Activated CD4-positive, alpha-beta T cell treated with anti-CD3 and anti-CD28 coated beads for 36 hours (primary cell): ENCODE measurements at regions of chr17 and their contacts with region 1.

Region 1: DNA sequence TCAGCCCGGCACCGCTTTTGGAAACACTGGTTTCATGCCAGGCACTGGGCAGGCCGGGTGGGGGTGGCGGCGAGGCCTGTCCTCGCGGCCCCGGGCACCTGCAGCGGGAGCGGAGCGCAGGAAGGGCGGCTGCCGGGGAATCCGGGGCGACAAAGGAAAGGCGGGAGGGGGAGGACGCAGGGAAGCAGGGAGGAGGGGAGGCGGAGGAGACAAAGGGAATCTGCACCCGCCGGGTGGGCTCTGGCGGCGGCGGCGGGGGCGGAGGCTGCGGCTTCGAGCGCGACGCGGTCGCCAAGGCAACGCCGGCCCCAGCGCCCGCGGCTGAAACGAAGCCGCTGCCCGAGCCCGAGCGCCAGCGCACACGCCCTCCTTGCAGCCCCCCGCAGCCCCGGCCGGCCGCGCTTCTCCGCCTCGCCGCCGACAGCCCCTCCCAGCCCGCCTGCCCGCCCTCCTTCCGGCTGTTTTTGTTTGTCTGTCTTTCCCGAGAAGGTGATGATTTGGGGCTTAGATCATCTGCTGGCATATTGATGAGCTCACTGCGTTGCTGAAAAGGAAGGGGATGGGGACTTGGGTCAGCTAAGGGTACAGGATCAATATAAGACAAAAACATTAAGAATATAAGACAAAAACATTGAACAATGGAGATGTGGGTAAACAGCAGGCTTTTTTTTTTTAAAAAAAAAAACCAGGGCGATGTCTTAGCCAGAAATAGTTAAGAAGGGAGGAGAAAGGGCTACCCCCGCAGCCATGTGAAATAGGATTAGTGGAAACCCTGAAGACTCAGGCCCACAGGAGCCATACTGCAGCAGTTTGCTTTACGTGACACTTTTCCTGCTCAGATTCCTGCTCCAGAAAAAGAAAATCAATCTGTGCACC is 32.7 kb downstream of the CDK5R1 start:
- DNase-seq: peak; percentile 82
- ATAC-seq: peak; percentile 5
- H3K4me3 Mint-ChIP-seq: peak overlapping the region; percentile 70
- H3K27ac Mint-ChIP-seq: peak overlapping the region; percentile 92
- H3K4me1 Mint-ChIP-seq: peaks cover 89% of the 10 kb centered on the region
- H3K27me3 Mint-ChIP-seq: no peaks in the 10 kb centered on the region

Region 2: GRCh38 chr17:32222620-32223019 is 296.8 kb before region 1 on chr17:
- CTCF ChIA-PET with region 1: no interaction called
- POLR2A ChIA-PET with region 1: interaction called, 4 read pairs
- intact Hi-C with region 1: loop called in 1 of 2 experiments (anchors 2 kb)
- DNase-seq: no peak
- ATAC-seq: no peak
- H3K4me3 Mint-ChIP-seq: no peak overlapping the region
- H3K27ac Mint-ChIP-seq: no peak overlapping the region
- H3K4me1 Mint-ChIP-seq: peaks cover 46% of the 10 kb centered on the region
- H3K27me3 Mint-ChIP-seq: no peaks in the 10 kb centered on the region

Region 3: GRCh38 chr17:32444308-32445073 is 75.0 kb before region 1 on chr17 and contains the start of gene PSMD11:
- CTCF ChIA-PET with region 1: interaction called, 4 read pairs
- POLR2A ChIA-PET with region 1: interaction called, 5 read pairs
- intact Hi-C with region 1: loop called (anchors 1 kb)
- DNase-seq: peak; percentile 100
- ATAC-seq: peak; percentile 96
- H3K4me3 Mint-ChIP-seq: peak within 1 kb of the TSS; percentile 82
- H3K27ac Mint-ChIP-seq: peak within 1 kb of the TSS; percentile 95
- H3K4me1 Mint-ChIP-seq: peaks cover 32% of the 10 kb centered on the region
- H3K27me3 Mint-ChIP-seq: peaks cover 2% of the 10 kb centered on the region
- total RNA-seq, gene PSMD11: 109 to 135 TPM

Region 4: GRCh38 chr17:32486111-32486700 is 33.3 kb before region 1 on chr17:
- CTCF ChIA-PET with region 1: interaction called, 7 read pairs
- POLR2A ChIA-PET with region 1: interaction called, 19 read pairs
- intact Hi-C with region 1: loop called (anchors 1 to 2 kb)
- DNase-seq: peak; percentile 82
- ATAC-seq: peak; percentile 71
- H3K4me3 Mint-ChIP-seq: peak overlapping the region; percentile 54
- H3K27ac Mint-ChIP-seq: no peak overlapping the region
- H3K4me1 Mint-ChIP-seq: peaks cover 48% of the 10 kb centered on the region
- H3K27me3 Mint-ChIP-seq: no peaks in the 10 kb centered on the region

Region 5: DNA sequence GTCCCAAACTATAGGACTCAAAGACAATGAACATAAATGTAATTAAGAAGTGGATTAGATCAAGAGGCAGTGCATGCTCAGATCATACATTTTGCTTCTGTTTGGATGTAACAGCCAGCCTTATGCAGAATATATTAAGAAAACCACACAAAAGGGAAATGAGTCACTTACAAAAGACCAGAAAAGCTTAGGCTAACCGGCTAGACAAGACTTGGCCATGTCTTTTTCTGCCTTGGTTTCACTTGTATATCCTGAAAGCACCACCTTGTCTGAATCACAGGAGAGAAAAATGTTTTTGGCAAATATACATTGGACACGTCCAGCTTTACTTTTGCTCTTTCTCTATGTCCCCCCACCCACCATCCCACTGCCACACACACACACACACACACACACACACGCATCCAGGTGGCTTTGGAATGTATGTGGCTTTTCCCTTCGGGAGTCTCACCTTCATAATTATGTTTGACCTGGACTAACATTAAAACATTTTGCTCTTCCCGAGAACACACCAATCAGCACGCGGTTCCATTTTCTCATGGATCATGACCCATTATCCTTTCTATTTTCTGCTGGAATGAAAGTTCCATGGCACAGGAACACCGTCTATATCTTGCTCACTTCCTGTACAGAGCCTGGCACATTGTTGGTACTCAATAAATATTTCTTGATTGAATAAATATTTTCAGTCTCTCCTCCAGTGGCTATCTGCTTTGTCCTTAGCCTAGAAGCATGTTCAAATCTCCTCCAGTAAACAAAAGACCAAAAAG is 31.9 kb after region 1 on chr17:
- CTCF ChIA-PET with region 1: no interaction called
- POLR2A ChIA-PET with region 1: no interaction called
- intact Hi-C with region 1: loop called (anchors 1 kb)
- DNase-seq: peak; percentile 13
- ATAC-seq: peak; percentile 90
- H3K4me3 Mint-ChIP-seq: no peak overlapping the region
- H3K27ac Mint-ChIP-seq: peak overlapping the region; percentile 40
- H3K4me1 Mint-ChIP-seq: peaks cover 42% of the 10 kb centered on the region
- H3K27me3 Mint-ChIP-seq: no peaks in the 10 kb centered on the region

Region 6: DNA sequence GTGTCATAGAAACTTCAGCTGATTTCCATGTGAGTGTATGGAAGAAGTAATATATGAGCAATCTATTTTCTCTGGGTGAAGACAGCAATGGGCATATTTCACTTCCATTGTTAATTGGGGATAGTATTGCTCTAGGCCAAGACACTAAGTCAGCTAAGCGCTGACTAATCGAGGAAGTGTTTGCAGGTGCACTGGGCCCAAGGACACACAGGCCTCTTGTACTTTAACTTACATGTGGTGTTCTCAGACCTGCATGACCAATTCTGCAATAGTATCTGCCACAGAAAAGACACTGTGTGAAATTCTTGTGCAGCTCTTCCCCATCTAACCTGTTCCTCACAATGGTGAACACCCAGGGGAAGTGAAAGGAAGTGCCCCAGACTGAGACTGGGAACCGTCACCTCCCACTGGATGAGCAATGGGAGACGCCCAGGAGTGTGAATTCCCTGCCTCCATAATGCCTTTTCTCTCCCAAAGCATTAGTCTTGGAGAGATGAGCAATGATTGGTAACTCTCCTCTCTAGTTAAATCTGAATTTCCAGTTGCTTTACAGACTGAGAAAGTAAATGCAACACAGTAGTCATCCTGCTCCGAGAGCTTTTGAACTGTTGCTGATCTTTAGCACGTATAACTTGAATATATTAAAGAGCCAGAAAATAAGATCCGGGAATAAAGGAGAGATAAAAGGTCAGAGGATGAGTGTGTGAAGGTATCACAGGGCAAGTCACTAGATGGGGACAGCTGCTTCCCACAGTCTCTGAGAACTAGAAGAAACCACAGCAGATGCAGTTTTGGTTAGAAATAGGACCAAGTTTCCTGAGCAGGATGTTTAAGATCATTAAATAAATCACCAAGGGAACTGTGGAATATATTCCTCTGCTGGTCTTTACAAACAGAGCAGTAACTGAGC is 50.0 kb after region 1 on chr17:
- CTCF ChIA-PET with region 1: no interaction called
- POLR2A ChIA-PET with region 1: interaction called, 5 read pairs
- intact Hi-C with region 1: loop called in 1 of 2 experiments (anchors 1 kb)
- DNase-seq: peak; percentile 16
- ATAC-seq: peak; percentile 86
- H3K4me3 Mint-ChIP-seq: no peak overlapping the region
- H3K27ac Mint-ChIP-seq: peak overlapping the region; percentile 68
- H3K4me1 Mint-ChIP-seq: peaks cover 22% of the 10 kb centered on the region
- H3K27me3 Mint-ChIP-seq: no peaks in the 10 kb centered on the region